ENCODE measurements at regions of chr3 and their contacts with region 1.

Region 1: DNA sequence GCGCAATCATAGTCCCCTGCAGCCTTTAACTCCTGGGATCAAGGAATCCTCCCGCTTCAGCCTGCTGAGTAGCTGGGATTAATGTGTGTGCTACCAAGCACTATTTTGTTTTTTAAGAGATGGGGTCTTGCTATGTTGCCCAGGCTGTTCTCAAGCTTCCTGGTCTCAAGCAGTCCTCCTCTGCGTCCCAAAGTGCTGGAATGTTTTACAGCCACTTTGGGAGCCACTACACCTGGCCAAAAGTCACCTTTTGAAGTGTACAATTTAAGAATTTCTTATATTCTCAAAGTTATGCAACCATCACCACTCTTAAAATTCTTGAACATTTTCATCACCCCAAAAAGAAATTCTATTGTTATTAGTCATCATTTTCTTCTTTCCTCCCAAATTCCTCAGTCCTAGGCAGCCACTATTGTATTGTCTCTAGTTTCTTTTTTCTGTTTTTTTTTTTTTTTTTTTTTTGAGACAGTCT is 17.8 kb downstream of the CDV3 start:
- DNase-seq: no peak
- CTCF ChIP-seq: no peak

Region 2: GRCh38 chr3:133448478-133449122 is 142.7 kb before region 1 on chr3:
- CTCF ChIA-PET with region 1: no interaction called
- POLR2A ChIA-PET with region 1: interaction called, 12 read pairs
- DNase-seq: peak; percentile 80
- CTCF ChIP-seq: no peak

Region 3: GRCh38 chr3:133578548-133579191 is 12.6 kb before region 1 on chr3:
- CTCF ChIA-PET with region 1: interaction called, 20 read pairs
- POLR2A ChIA-PET with region 1: interaction called, 3 read pairs
- DNase-seq: no peak
- CTCF ChIP-seq: peak; percentile 37

Region 4: GRCh38 chr3:135084405-135084804 is 1493.1 kb after region 1 on chr3:
- CTCF ChIA-PET with region 1: no interaction called
- POLR2A ChIA-PET with region 1: no interaction called
- DNase-seq: no peak
- CTCF ChIP-seq: no peak

Measured in GM10248 (cell line).